PC-9 (cell line): ENCODE measurements at regions of chr6 and their contacts with region 1.

Region 1: DNA sequence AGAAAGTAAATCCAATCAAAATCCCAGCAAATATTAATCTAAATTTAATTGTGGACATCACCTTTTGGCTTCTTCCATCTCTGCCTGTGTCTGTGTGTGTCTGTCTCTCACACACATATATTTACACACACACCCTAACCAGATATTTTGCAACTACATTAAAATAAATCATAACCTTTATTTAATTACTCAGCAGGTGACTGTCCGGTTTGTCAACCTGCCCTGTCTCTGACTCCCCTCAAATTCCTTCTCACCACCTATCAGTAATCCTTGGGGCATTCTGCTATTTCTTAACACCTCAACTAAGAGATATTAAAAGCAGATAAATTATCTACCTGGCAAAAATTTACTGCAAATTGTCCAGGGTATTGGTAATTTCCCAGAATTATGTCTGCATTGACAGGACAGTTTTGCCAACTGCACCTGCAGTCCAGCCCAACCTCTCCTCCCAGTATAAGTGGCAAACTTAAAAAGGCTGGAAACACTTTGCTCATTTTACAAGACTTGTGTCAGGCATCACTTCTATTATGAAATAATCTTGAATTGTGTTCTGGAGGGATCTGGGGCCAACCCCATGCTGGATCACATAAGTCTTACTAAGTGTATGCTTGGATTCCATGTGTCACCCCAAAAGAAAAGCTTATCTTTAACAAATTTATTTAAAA is 216.1 kb downstream of the GMDS start:
- DNase-seq: peak; percentile 15 to 91
- H3K4me3 ChIP-seq: no peak overlapping the region
- H3K27ac ChIP-seq: peak overlapping the region; percentile 60
- H3K4me1 ChIP-seq: peaks cover 30% of the 10 kb centered on the region
- H3K27me3 ChIP-seq: no peaks in the 10 kb centered on the region
- CTCF ChIP-seq: no peak

Region 2: DNA sequence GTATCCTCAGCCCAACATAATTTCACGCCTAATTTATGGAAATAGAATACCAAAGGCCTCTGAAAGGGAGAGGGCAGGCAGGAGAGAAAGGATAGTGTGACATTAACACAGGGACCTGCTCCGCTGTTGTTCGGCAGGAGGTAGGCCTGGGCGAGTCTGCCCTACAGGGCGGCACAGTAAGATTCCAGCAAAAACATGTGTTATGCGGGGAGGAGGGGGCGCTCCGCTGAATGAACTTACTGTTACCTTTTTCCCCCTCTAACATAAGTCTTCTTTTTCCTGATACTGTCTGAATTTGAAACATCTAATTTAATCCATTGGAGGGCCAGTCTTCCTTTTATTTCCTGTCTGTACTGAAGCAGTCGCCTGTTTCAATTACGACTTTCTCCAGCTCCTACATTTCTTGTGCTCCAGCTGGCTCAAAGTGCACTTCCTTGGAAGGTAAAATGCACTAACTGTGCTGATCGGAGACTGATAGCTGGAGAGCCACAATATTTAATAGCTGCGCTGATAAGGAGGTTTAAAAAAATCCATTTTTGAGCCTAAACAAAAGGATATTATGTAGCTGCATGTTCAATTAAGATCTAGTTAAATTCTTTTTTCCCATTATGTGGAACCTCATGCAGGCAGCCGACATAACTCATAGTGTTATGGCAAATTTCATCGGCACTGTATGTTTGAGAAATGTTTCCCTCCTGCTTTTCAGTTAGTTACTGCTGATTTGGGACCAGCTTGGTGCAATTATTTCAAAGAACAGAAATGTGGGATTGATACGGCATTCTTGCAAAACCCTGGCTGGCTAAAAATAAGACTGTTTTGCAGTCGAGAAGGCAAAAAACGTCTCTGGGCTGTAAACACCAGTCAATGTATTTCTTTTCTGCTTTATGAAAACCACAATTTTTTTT is 226.5 kb before region 1 on chr6:
- CTCF ChIA-PET with region 1: no interaction called
- POLR2A ChIA-PET with region 1: no interaction called
- intact Hi-C with region 1: no loop called
- DNase-seq: no peak
- H3K4me3 ChIP-seq: no peak overlapping the region
- H3K27ac ChIP-seq: no peak overlapping the region
- H3K4me1 ChIP-seq: peaks cover 7% of the 10 kb centered on the region
- H3K27me3 ChIP-seq: no peaks in the 10 kb centered on the region
- CTCF ChIP-seq: no peak

Region 3: DNA sequence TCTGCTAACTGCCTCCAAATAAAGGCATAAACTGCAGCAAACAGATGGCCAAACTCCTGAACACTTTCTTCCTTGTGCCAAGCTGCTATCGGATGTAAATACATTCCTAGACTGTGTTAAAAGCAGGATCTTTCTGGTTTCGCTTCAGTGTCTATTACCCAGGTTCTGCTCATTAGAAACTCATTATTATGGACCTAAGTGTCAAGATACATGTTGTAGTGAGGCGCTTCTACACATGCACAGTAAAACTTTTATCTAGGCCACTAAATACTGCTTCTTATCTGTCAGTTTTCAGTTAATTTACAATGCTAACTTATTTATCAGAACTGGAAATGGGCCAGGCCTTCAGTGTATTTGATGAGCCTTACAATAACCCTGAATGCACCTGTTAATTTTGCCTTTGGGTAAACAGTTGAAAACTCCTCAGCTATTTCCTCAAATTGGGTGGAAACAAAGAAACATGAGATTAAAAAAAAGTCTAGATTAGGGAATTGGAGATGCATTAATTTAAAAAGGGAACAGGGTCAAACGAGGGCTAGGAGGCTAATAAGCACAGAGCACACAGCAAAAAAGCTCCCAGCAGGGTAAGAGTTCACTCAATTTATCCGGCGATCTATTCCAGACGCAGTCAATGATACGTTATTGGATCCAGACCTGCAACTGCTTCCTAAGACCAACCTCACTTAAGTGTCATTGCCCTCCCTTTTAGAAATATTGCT is 179.0 kb before region 1 on chr6:
- CTCF ChIA-PET with region 1: no interaction called
- POLR2A ChIA-PET with region 1: interaction called, 14 read pairs
- intact Hi-C with region 1: no loop called
- DNase-seq: no peak
- H3K4me3 ChIP-seq: no peak overlapping the region
- H3K27ac ChIP-seq: no peak overlapping the region
- H3K4me1 ChIP-seq: no peaks in the 10 kb centered on the region
- H3K27me3 ChIP-seq: no peaks in the 10 kb centered on the region
- CTCF ChIP-seq: no peak

Region 4: GRCh38 chr6:1940381-1940780 is 88.9 kb before region 1 on chr6:
- CTCF ChIA-PET with region 1: no interaction called
- POLR2A ChIA-PET with region 1: no interaction called
- intact Hi-C with region 1: no loop called
- DNase-seq: no peak
- H3K4me3 ChIP-seq: no peak overlapping the region
- H3K27ac ChIP-seq: no peak overlapping the region
- H3K4me1 ChIP-seq: no peaks in the 10 kb centered on the region
- H3K27me3 ChIP-seq: no peaks in the 10 kb centered on the region
- CTCF ChIP-seq: no peak

Region 5: GRCh38 chr6:2004888-2005287 is 24.4 kb before region 1 on chr6:
- CTCF ChIA-PET with region 1: no interaction called
- POLR2A ChIA-PET with region 1: no interaction called
- intact Hi-C with region 1: no loop called
- DNase-seq: no peak
- H3K4me3 ChIP-seq: no peak overlapping the region
- H3K27ac ChIP-seq: no peak overlapping the region
- H3K4me1 ChIP-seq: no peaks in the 10 kb centered on the region
- H3K27me3 ChIP-seq: no peaks in the 10 kb centered on the region
- CTCF ChIP-seq: no peak

Region 6: GRCh38 chr6:2016040-2016439 is 13.2 kb before region 1 on chr6:
- CTCF ChIA-PET with region 1: no interaction called
- POLR2A ChIA-PET with region 1: interaction called, 15 read pairs
- intact Hi-C with region 1: no loop called
- DNase-seq: no peak
- H3K4me3 ChIP-seq: no peak overlapping the region
- H3K27ac ChIP-seq: no peak overlapping the region
- H3K4me1 ChIP-seq: peaks cover 4% of the 10 kb centered on the region; the same call in 1 of the 2 replicates
- H3K27me3 ChIP-seq: no peaks in the 10 kb centered on the region
- CTCF ChIP-seq: no peak

Region 7: GRCh38 chr6:2111162-2111677 is 82.0 kb after region 1 on chr6:
- CTCF ChIA-PET with region 1: no interaction called
- POLR2A ChIA-PET with region 1: no interaction called
- intact Hi-C with region 1: no loop called
- DNase-seq: no peak
- H3K4me3 ChIP-seq: no peak overlapping the region
- H3K27ac ChIP-seq: no peak overlapping the region
- H3K4me1 ChIP-seq: no peaks in the 10 kb centered on the region
- H3K27me3 ChIP-seq: no peaks in the 10 kb centered on the region
- CTCF ChIP-seq: no peak